Naive thymus-derived CD8-positive, alpha-beta T cell (primary cell): ENCODE measurements at regions of chr3 and their contacts with region 1.

Region 1: GRCh38 chr3:72738752-72739530 is 109.3 kb downstream of the SHQ1 start:
- DNase-seq: peak; percentile 66 to 86 (median 77)
- ATAC-seq: peak; percentile 92 to 93
- H3K4me3 Mint-ChIP-seq: peak overlapping the region; percentile 81 to 96 (median 92)
- H3K27ac Mint-ChIP-seq: peak overlapping the region; percentile 94 to 99 (median 95)
- H3K4me1 Mint-ChIP-seq: peaks cover 14 to 35% (median 32%) of the 10 kb centered on the region in 4 donors
- H3K27me3 Mint-ChIP-seq: peaks cover 0 to 3% (median 0%) of the 10 kb centered on the region in 5 donors

Region 2: GRCh38 chr3:72750405-72750965 is 11.5 kb after region 1 on chr3:
- POLR2A ChIA-PET with region 1: interaction called, 85 read pairs
- DNase-seq: no peak
- ATAC-seq: no peak
- H3K4me3 Mint-ChIP-seq: peak overlapping the region in 3 of 10 donors; percentile 8 to 63 (median 9)
- H3K27ac Mint-ChIP-seq: peak overlapping the region in 9 of 10 donors; percentile 34 to 83 (median 53)
- H3K4me1 Mint-ChIP-seq: peaks cover 21 to 57% (median 47%) of the 10 kb centered on the region in 4 donors
- H3K27me3 Mint-ChIP-seq: no peaks in the 10 kb centered on the region

Region 3: DNA sequence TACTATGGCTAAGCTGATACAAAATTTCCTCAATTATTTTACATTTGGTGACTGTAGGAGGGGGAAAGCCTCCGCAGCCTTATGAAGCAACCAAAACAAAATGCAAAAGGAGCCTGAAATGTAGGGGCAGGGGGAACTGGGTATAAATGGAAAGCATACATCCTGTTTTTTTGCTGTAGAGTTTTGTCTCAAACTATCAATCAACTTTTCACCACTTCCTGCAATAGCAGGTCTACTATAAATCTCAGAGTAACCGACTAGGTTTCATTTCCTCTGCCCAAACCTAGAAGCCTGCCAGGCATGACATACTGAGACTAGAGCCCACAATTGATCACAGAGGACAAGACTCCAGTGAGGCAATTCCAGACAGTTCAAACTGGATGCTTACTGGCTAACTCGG is 18.0 kb after region 1 on chr3:
- POLR2A ChIA-PET with region 1: interaction called, 85 read pairs
- DNase-seq: peak in 9 of 10 donors; percentile 22 to 86 (median 64)
- ATAC-seq: peak; percentile 98 to 99
- H3K4me3 Mint-ChIP-seq: peak overlapping the region; percentile 64 to 82 (median 76)
- H3K27ac Mint-ChIP-seq: peak overlapping the region; percentile 89 to 99 (median 96)
- H3K4me1 Mint-ChIP-seq: peaks cover 23 to 69% (median 63%) of the 10 kb centered on the region in 4 donors
- H3K27me3 Mint-ChIP-seq: no peaks in the 10 kb centered on the region

Region 4: GRCh38 chr3:72789786-72790185 is 50.8 kb after region 1 on chr3:
- POLR2A ChIA-PET with region 1: interaction called, 10 read pairs
- DNase-seq: no peak
- ATAC-seq: no peak
- H3K4me3 Mint-ChIP-seq: no peak overlapping the region
- H3K27ac Mint-ChIP-seq: peak overlapping the region in 2 of 10 donors; percentile 60 to 81
- H3K4me1 Mint-ChIP-seq: peaks cover 8 to 10% (median 9%) of the 10 kb centered on the region in 4 donors
- H3K27me3 Mint-ChIP-seq: no peaks in the 10 kb centered on the region

Region 5: DNA sequence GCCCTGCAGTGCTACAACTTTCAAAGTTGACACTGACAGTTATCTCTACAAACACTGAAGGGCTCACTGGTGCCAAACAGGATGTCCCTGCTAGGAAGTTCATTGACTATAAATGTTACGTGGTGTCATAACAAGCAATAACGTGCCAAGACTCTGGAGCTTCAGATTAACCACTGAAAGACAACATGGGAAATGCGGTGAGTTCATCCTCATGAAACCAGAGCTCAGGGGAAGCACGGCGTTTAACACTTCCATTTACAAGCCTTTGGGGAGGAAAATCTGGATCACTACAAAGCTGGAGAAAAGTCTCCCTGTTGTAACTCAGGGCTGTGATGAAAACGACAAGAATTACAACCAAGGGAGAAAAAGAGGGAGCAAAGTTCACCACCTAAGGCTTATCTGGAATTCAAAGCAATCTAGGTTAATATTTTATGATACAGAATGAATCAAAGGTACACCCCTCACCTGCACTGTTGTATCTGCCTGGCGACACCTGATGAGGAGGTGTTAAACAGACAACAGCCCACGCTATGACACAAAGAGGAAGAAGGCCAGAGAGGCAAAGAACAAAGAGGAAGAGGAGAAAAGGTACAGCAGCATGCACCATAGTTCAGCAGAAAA is 82.3 kb after region 1 on chr3:
- POLR2A ChIA-PET with region 1: interaction called, 35 read pairs
- DNase-seq: peak in 5 of 10 donors; percentile 2 to 35 (median 13)
- ATAC-seq: peak; percentile 71 to 82
- H3K4me3 Mint-ChIP-seq: no peak overlapping the region
- H3K27ac Mint-ChIP-seq: no peak overlapping the region
- H3K4me1 Mint-ChIP-seq: peaks cover 0 to 11% (median 6%) of the 10 kb centered on the region in 4 donors
- H3K27me3 Mint-ChIP-seq: no peaks in the 10 kb centered on the region